CD4-positive, alpha-beta memory T cell (primary cell): ENCODE measurements at regions of chr11 and their contacts with region 1.

Region 1: GRCh38 chr11:45964911-45965389 is 42.5 kb downstream of the LARGE2 start:
- DNase-seq: peak; percentile 63 to 65 (median 65)
- H3K4me3 ChIP-seq: no peak overlapping the region
- H3K4me3 Mint-ChIP-seq: no peak overlapping the region
- H3K27ac ChIP-seq: no peak overlapping the region
- H3K27ac Mint-ChIP-seq: no peak overlapping the region
- H3K4me1 ChIP-seq: no peaks in the 10 kb centered on the region
- H3K4me1 Mint-ChIP-seq: peaks cover 0 to 1% (median 0%) of the 10 kb centered on the region in 4 donors
- H3K27me3 ChIP-seq: no peaks in the 10 kb centered on the region
- H3K27me3 Mint-ChIP-seq: no peaks in the 10 kb centered on the region

Region 2: DNA sequence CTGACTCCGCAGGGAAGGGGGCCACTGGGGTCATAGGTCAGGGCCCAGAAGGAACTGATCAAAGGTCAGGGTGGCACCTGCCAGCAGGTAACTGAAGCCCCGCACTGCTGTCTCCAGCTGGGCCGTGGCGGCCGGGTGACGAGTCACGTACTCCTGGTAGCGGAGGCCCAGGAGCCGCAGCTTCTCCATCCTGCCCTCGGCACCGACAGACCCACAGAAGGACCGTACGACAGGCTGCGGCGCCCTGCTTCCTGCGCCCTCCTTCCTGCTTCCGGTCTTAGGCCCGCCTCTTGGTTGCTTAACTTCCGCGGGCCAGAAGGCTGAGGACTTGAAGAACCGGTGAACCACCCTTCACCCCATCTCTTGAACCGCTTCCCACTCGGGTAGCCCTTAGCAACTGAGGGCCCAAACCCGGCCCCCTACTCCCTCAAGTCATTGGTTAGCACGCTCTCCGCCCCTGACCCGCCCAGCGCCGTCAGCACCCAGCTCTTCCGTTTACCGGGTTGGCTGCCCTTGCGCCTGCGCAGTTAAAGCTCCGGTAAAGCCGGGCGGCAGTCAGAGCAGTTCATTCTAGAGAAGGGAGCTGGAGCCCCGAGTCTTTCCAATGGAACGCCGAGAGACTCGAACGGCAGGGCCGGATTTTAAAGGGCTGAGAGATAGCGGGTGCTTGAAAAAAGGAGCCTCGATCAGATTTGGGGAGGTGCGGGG is 47.2 kb before region 1 on chr11 and contains the start of gene PEX16:
- CTCF ChIA-PET with region 1: interaction called, 4 read pairs
- POLR2A ChIA-PET with region 1: interaction called, 10 read pairs
- intact Hi-C with region 1: no loop called
- DNase-seq: peak; percentile 94 to 99 (median 99)
- H3K4me3 ChIP-seq: peak within 1 kb of the TSS; percentile 88 to 91
- H3K4me3 Mint-ChIP-seq: peak within 1 kb of the TSS; percentile 91 to 98 (median 96)
- H3K27ac ChIP-seq: peak within 1 kb of the TSS; percentile 89
- H3K27ac Mint-ChIP-seq: peak within 1 kb of the TSS; percentile 95 to 100 (median 99)
- H3K4me1 ChIP-seq: peaks cover 50% of the 10 kb centered on the region
- H3K4me1 Mint-ChIP-seq: peaks cover 24 to 67% (median 47%) of the 10 kb centered on the region in 4 donors
- H3K27me3 ChIP-seq: no peaks in the 10 kb centered on the region
- H3K27me3 Mint-ChIP-seq: no peaks in the 10 kb centered on the region
- total RNA-seq, gene PEX16: 53.0 to 62.7 TPM

Region 3: DNA sequence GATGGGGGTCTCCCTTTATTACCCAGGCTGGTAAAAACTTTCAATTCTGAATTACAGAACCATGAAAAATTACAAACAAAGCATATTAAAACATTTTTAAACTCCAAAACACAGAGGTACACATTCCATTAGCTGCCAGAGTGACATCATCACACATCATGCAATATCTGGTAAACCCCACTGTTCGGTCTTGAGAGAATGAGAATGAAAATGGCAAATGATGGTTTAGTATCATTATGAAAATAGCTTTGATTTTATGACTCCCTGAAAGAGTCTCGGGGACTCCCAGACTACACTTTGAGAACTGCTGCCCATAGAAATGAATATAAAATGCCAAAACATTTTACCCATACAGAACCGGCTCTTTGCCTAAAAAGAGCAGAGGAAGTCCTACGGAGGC is 23.7 kb before region 1 on chr11:
- CTCF ChIA-PET with region 1: interaction called, 16 read pairs
- POLR2A ChIA-PET with region 1: no interaction called
- intact Hi-C with region 1: no loop called
- DNase-seq: no peak
- H3K4me3 ChIP-seq: no peak overlapping the region
- H3K4me3 Mint-ChIP-seq: no peak overlapping the region
- H3K27ac ChIP-seq: no peak overlapping the region
- H3K27ac Mint-ChIP-seq: peak overlapping the region in 1 of 7 donors; percentile 18
- H3K4me1 ChIP-seq: no peaks in the 10 kb centered on the region
- H3K4me1 Mint-ChIP-seq: no peaks in the 10 kb centered on the region
- H3K27me3 ChIP-seq: no peaks in the 10 kb centered on the region
- H3K27me3 Mint-ChIP-seq: no peaks in the 10 kb centered on the region

Region 4: DNA sequence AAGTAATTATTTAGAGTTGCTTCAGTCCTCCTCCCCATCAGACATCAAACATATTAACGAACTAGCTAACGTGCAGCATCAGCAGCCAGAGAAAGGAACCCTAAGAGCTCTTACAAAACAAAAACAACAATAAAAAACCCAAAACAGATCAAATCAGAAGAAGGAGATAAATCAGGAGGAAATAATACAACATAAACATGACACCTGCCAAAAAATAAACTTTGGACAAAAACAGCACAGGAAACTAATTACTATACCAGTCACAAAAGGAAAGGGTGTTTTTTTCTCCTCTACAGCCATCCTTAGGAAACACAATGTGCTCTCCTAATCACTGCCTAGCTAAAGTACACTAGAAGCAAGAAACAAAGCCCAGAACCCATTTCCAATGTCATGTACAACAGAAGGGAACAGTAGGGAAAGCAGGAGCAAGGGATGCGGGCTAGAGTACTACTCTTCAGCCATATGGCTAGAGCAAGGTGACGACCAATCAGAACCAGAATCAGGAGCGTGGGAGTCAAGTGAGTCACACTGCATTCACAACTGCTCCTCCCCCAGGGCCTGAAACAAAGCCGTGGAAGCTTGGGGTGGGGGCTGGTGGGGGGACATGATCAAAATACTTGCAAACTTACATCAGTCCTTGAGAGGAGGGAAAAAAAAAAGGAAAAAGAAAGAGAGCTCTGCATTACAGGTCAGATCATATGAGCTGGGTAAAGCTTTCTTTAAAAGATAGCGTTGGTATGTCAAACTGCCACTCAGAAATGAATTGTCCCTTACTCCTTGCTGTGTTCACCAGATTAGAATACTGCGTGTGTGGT is 17.9 kb after region 1 on chr11:
- CTCF ChIA-PET with region 1: interaction called, 57 read pairs
- POLR2A ChIA-PET with region 1: no interaction called
- intact Hi-C with region 1: no loop called
- DNase-seq: no peak
- H3K4me3 ChIP-seq: no peak overlapping the region
- H3K4me3 Mint-ChIP-seq: no peak overlapping the region
- H3K27ac ChIP-seq: no peak overlapping the region
- H3K27ac Mint-ChIP-seq: peak overlapping the region in 6 of 7 donors; percentile 15 to 89 (median 73)
- H3K4me1 ChIP-seq: no peaks in the 10 kb centered on the region
- H3K4me1 Mint-ChIP-seq: peaks cover 32 to 49% (median 40%) of the 10 kb centered on the region in 4 donors
- H3K27me3 ChIP-seq: no peaks in the 10 kb centered on the region
- H3K27me3 Mint-ChIP-seq: no peaks in the 10 kb centered on the region

Region 5: GRCh38 chr11:46006418-46007070 is 41.6 kb after region 1 on chr11:
- CTCF ChIA-PET with region 1: interaction called, 75 read pairs
- POLR2A ChIA-PET with region 1: interaction called, 4 read pairs
- intact Hi-C with region 1: loop called (anchors 1 kb)
- DNase-seq: peak in 4 of 5 donors; percentile 52 to 63 (median 56)
- H3K4me3 ChIP-seq: no peak overlapping the region
- H3K4me3 Mint-ChIP-seq: no peak overlapping the region
- H3K27ac ChIP-seq: no peak overlapping the region
- H3K27ac Mint-ChIP-seq: peak overlapping the region in 3 of 7 donors; percentile 29 to 79 (median 56)
- H3K4me1 ChIP-seq: no peaks in the 10 kb centered on the region
- H3K4me1 Mint-ChIP-seq: peaks cover 0 to 4% (median 2%) of the 10 kb centered on the region in 4 donors
- H3K27me3 ChIP-seq: no peaks in the 10 kb centered on the region
- H3K27me3 Mint-ChIP-seq: no peaks in the 10 kb centered on the region

Region 6: GRCh38 chr11:46176402-46176801 is 211.5 kb after region 1 on chr11:
- CTCF ChIA-PET with region 1: no interaction called
- POLR2A ChIA-PET with region 1: no interaction called
- intact Hi-C with region 1: no loop called
- DNase-seq: no peak
- H3K4me3 ChIP-seq: no peak overlapping the region
- H3K4me3 Mint-ChIP-seq: no peak overlapping the region
- H3K27ac ChIP-seq: no peak overlapping the region
- H3K27ac Mint-ChIP-seq: no peak overlapping the region
- H3K4me1 ChIP-seq: no peaks in the 10 kb centered on the region
- H3K4me1 Mint-ChIP-seq: no peaks in the 10 kb centered on the region
- H3K27me3 ChIP-seq: no peaks in the 10 kb centered on the region
- H3K27me3 Mint-ChIP-seq: peaks cover 13 to 17% of the 10 kb centered on the region in 2 donors

Region 7: GRCh38 chr11:46238967-46239800 is 274.2 kb after region 1 on chr11:
- CTCF ChIA-PET with region 1: interaction called, 6 read pairs
- POLR2A ChIA-PET with region 1: no interaction called
- intact Hi-C with region 1: loop called (anchors 2 kb)
- DNase-seq: peak; percentile 67 to 81 (median 77)
- H3K4me3 ChIP-seq: peak overlapping the region; percentile 40 to 81
- H3K4me3 Mint-ChIP-seq: peak overlapping the region; percentile 35 to 90 (median 75)
- H3K27ac ChIP-seq: no peak overlapping the region
- H3K27ac Mint-ChIP-seq: peak overlapping the region in 2 of 7 donors; percentile 42 to 60
- H3K4me1 ChIP-seq: peaks cover 30% of the 10 kb centered on the region
- H3K4me1 Mint-ChIP-seq: peaks cover 18 to 49% (median 24%) of the 10 kb centered on the region in 4 donors
- H3K27me3 ChIP-seq: peaks cover 6% of the 10 kb centered on the region
- H3K27me3 Mint-ChIP-seq: peaks cover 14 to 16% of the 10 kb centered on the region in 2 donors

Region 8: GRCh38 chr11:46537537-46538295 is 572.8 kb after region 1 on chr11:
- CTCF ChIA-PET with region 1: no interaction called
- POLR2A ChIA-PET with region 1: no interaction called
- intact Hi-C with region 1: loop called (anchors 10 kb)
- DNase-seq: peak; percentile 60 to 67 (median 64)
- H3K4me3 ChIP-seq: no peak overlapping the region
- H3K4me3 Mint-ChIP-seq: peak overlapping the region in 2 of 8 donors; percentile 23 to 31
- H3K27ac ChIP-seq: no peak overlapping the region
- H3K27ac Mint-ChIP-seq: peak overlapping the region in 5 of 7 donors; percentile 23 to 61 (median 29)
- H3K4me1 ChIP-seq: peaks cover 6% of the 10 kb centered on the region
- H3K4me1 Mint-ChIP-seq: peaks cover 33 to 47% (median 39%) of the 10 kb centered on the region in 4 donors
- H3K27me3 ChIP-seq: no peaks in the 10 kb centered on the region
- H3K27me3 Mint-ChIP-seq: no peaks in the 10 kb centered on the region